ENCODE measurements at regions of chr7 and their contacts with region 1.

Region 1: GRCh38 chr7:14717816-14718215 is 184.7 kb downstream of the DGKB start:
- DNase-seq: no peak
- ATAC-seq: peak in 3 of 8 donors; percentile 43 to 57 (median 49)
- H3K4me3 ChIP-seq: no peak overlapping the region
- H3K27ac ChIP-seq: no peak overlapping the region
- H3K4me1 ChIP-seq: peaks cover 0 to 6% (median 0%) of the 10 kb centered on the region in 9 donors
- H3K27me3 ChIP-seq: no peaks in the 10 kb centered on the region
- CTCF ChIP-seq: peak; percentile 29 to 79 (median 58)

Region 2: GRCh38 chr7:14793151-14793550 is 75.3 kb after region 1 on chr7:
- intact Hi-C with region 1: no loop called
- DNase-seq: no peak
- ATAC-seq: no peak
- H3K4me3 ChIP-seq: no peak overlapping the region
- H3K27ac ChIP-seq: no peak overlapping the region
- H3K4me1 ChIP-seq: no peaks in the 10 kb centered on the region
- H3K27me3 ChIP-seq: no peaks in the 10 kb centered on the region
- CTCF ChIP-seq: no peak

Region 3: GRCh38 chr7:14902589-14903067 is 184.8 kb after region 1 on chr7 and contains the start of gene DGKB:
- intact Hi-C with region 1: loop called in 1 of 10 experiments (anchors 10 kb)
- DNase-seq: peak; percentile 19 to 38
- ATAC-seq: peak; percentile 64 to 90 (median 80)
- H3K4me3 ChIP-seq: peak within 1 kb of the TSS in 9 of 10 donors; percentile 23 to 53 (median 46)
- H3K27ac ChIP-seq: peak within 1 kb of the TSS in 5 of 10 donors; percentile 13 to 41 (median 28)
- H3K4me1 ChIP-seq: peaks cover 0 to 13% (median 0%) of the 10 kb centered on the region in 9 donors
- H3K27me3 ChIP-seq: peaks cover 0 to 10% (median 0%) of the 10 kb centered on the region in 7 donors
- CTCF ChIP-seq: no peak
- total RNA-seq, gene DGKB: 0.17 to 1.2 (median 0.79) TPM

Region 4: DNA sequence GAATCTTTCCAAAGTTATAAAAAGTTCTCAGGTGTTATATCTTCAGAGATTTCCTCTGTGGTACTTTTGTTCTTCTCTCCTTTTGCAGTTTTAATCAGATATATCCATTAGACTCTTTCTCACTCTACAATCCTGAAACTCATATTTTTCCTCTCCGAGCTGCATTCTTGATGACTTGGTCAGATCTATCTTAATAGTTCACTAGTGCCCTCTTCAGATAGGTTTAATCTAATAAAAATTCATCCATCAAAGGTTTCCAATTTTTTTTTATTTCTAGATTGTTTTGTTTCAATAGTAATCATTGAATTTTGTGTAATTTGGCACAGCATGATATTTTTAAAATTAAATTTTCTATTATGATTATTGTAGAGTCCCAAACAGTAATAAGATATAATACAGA is 206.6 kb after region 1 on chr7:
- intact Hi-C with region 1: loop called in 6 of 10 experiments (anchors 5 to 10 kb)
- DNase-seq: no peak
- ATAC-seq: no peak
- H3K4me3 ChIP-seq: no peak overlapping the region
- H3K27ac ChIP-seq: no peak overlapping the region
- H3K4me1 ChIP-seq: no peaks in the 10 kb centered on the region
- H3K27me3 ChIP-seq: no peaks in the 10 kb centered on the region
- CTCF ChIP-seq: peak in 4 of 9 donors; percentile 12 to 33 (median 19)

Region 5: DNA sequence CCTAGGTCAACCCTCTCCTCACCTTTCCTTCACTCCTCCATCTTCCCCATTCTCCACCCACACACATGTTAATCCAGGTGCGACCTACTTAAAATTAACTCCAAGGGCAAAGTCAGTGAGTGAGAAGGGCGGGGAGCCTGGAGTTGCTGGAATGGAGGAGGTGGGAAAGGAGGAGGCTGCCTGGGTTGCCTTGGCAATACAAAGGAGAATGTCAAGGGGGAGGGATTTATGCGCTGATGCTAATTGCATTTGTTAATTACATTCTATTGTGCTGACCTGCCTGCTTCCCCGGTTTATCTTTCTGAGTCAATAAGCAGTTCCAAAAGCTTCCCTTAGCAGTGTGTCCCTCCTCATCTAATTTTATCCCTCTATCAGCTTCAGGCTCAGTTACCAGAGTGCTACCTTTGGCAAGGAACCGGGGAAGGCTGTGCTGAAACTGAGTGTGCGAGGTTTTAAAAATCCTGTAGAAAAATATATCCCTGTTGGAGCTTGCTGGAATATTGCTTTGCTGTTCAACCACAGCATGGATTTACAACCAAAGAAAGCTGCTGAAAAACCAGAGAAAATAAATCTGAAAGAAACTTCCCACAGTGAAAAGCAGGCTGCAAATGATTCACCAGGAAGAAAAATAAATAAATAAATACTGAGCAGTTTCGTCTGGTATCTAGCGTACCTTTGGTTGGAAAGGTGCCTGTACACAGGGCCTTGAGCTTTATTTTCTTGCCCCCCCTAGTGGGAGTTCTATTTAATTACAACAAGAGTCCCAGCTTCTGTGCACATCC is 297.9 kb after region 1 on chr7:
- intact Hi-C with region 1: loop called (anchors 1 to 5 kb)
- DNase-seq: peak; percentile 8 to 23
- ATAC-seq: peak; percentile 81 to 94 (median 87)
- H3K4me3 ChIP-seq: peak overlapping the region in 7 of 10 donors; percentile 17 to 39 (median 34)
- H3K27ac ChIP-seq: peak overlapping the region in 7 of 10 donors; percentile 1 to 77 (median 54)
- H3K4me1 ChIP-seq: peaks cover 0 to 12% (median 0%) of the 10 kb centered on the region in 9 donors
- H3K27me3 ChIP-seq: no peaks in the 10 kb centered on the region
- CTCF ChIP-seq: peak; percentile 56 to 83 (median 76)